ENCODE measurements at regions of chr16 and their contacts with region 1.

Region 1: DNA sequence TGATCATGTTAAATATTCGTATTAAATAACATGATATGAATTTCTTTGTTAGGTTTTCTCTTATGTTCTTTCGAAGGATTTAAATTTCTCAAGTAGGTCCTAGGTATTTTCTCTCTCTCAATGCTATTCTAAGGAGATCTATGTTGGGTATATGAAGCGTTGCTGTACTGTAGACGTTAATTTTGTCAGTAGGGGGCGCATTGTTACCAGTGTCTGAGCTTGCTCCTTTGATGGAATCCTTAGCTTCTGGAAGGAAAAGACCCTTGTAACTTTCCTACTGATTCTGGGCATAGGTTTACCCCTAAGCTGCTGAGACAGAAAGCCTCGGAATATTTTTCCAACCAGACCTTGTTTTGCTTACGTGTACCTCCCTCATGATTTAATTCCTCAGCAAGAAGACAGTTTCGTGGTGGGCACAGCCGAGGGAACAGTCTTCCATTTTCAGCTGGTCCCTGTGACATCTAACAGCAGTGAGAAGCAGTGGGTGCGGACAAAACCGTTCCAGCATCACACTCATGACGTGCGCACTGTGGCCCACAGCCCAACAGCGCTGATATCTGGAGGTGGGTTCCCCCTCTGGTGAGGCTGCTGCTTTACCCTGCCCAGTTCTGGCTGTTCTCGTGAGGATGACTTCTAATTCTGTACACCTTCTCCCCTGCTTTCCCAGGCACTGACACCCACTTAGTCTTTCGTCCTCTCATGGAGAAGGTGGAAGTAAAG is 17.9 kb downstream of the UTP4 start:
- DNase-seq: no peak
- ATAC-seq: peak; percentile 95

Region 2: GRCh38 chr16:69286941-69287713 is 136.8 kb after region 1 on chr16:
- intact Hi-C with region 1: loop called (anchors 5 kb)
- DNase-seq: peak; percentile 69
- ATAC-seq: peak; percentile 91